ENCODE measurements at regions of chr17 and their contacts with region 1.

Region 1: GRCh38 chr17:45135192-45135977 is at the start of gene ACBD4:
- DNase-seq: peak; percentile 99 to 100
- ATAC-seq: peak; percentile 59 to 78
- H3K4me3 ChIP-seq: peak within 1 kb of the TSS; percentile 55
- H3K27ac ChIP-seq: peak within 1 kb of the TSS; percentile 82 to 93
- H3K4me1 ChIP-seq: peaks cover 33% of the 10 kb centered on the region
- CTCF ChIP-seq: peak; percentile 100
- EP300 ChIP-seq: no peak
- POLR2A ChIP-seq: peak; percentile 77
- RAD21 ChIP-seq: peak; percentile 99 to 100
- polyA plus RNA-seq, gene ACBD4: 11.2 and 11.4 TPM in 2 replicates

Region 2: GRCh38 chr17:44758414-44759085 is 376.8 kb before region 1 on chr17 and contains the start of gene ADAM11:
- CTCF ChIA-PET with region 1: no interaction called
- POLR2A ChIA-PET with region 1: no interaction called
- DNase-seq: peak in 1 of 2 experiments; percentile 74
- ATAC-seq: peak; percentile 39 to 58
- H3K4me3 ChIP-seq: peak within 1 kb of the TSS; percentile 64
- H3K27ac ChIP-seq: peak within 1 kb of the TSS; percentile 62 to 89; a peak in 5 of 6 replicates
- H3K4me1 ChIP-seq: peaks cover 10% of the 10 kb centered on the region; the same call in 1 of the 3 replicates
- CTCF ChIP-seq: no peak
- EP300 ChIP-seq: no peak
- POLR2A ChIP-seq: no peak
- RAD21 ChIP-seq: no peak
- polyA plus RNA-seq, gene ADAM11: 0.75 and 0.79 TPM in 2 replicates

Region 3: GRCh38 chr17:44988044-44988942 is 147.1 kb before region 1 on chr17:
- CTCF ChIA-PET with region 1: interaction called, 11 read pairs
- POLR2A ChIA-PET with region 1: no interaction called
- DNase-seq: no peak
- ATAC-seq: no peak
- H3K4me3 ChIP-seq: no peak overlapping the region
- H3K27ac ChIP-seq: no peak overlapping the region
- H3K4me1 ChIP-seq: peaks cover 6% of the 10 kb centered on the region; the same call in 1 of the 3 replicates
- CTCF ChIP-seq: no peak
- EP300 ChIP-seq: no peak
- POLR2A ChIP-seq: no peak
- RAD21 ChIP-seq: no peak

Region 4: GRCh38 chr17:45067637-45068036 is 67.7 kb before region 1 on chr17:
- CTCF ChIA-PET with region 1: interaction called, 19 read pairs
- POLR2A ChIA-PET with region 1: no interaction called
- DNase-seq: no peak
- ATAC-seq: no peak
- H3K4me3 ChIP-seq: no peak overlapping the region
- H3K27ac ChIP-seq: no peak overlapping the region
- H3K4me1 ChIP-seq: peaks cover 2% of the 10 kb centered on the region
- CTCF ChIP-seq: no peak
- EP300 ChIP-seq: no peak
- POLR2A ChIP-seq: no peak
- RAD21 ChIP-seq: no peak

Region 5: GRCh38 chr17:45148183-45149036 is 13.0 kb after region 1 on chr17 and contains the start of gene HEXIM1:
- CTCF ChIA-PET with region 1: interaction called, 659 read pairs
- POLR2A ChIA-PET with region 1: interaction called, 117 read pairs
- DNase-seq: peak; percentile 99 to 100
- ATAC-seq: peak; percentile 74 to 86
- H3K4me3 ChIP-seq: peak within 1 kb of the TSS; percentile 74
- H3K27ac ChIP-seq: peak within 1 kb of the TSS; percentile 97 to 98
- H3K4me1 ChIP-seq: peaks cover 27% of the 10 kb centered on the region
- CTCF ChIP-seq: no peak
- EP300 ChIP-seq: no peak
- POLR2A ChIP-seq: peak; percentile 100
- RAD21 ChIP-seq: peak in 1 of 2 experiments; percentile 7; a peak in 1 of 5 replicates
- polyA plus RNA-seq, gene HEXIM1: 39.3 and 54.0 TPM in 2 replicates

Region 6: GRCh38 chr17:45218895-45219661 is 83.7 kb after region 1 on chr17:
- CTCF ChIA-PET with region 1: interaction called, 41 read pairs
- POLR2A ChIA-PET with region 1: interaction called, 4 read pairs
- DNase-seq: peak; percentile 85 to 87
- ATAC-seq: peak; percentile 61 to 82
- H3K4me3 ChIP-seq: no peak overlapping the region
- H3K27ac ChIP-seq: peak overlapping the region; percentile 97
- H3K4me1 ChIP-seq: peaks cover 37% of the 10 kb centered on the region
- CTCF ChIP-seq: peak; percentile 99
- EP300 ChIP-seq: no peak
- POLR2A ChIP-seq: no peak
- RAD21 ChIP-seq: peak; percentile 99 to 100

Region 7: DNA sequence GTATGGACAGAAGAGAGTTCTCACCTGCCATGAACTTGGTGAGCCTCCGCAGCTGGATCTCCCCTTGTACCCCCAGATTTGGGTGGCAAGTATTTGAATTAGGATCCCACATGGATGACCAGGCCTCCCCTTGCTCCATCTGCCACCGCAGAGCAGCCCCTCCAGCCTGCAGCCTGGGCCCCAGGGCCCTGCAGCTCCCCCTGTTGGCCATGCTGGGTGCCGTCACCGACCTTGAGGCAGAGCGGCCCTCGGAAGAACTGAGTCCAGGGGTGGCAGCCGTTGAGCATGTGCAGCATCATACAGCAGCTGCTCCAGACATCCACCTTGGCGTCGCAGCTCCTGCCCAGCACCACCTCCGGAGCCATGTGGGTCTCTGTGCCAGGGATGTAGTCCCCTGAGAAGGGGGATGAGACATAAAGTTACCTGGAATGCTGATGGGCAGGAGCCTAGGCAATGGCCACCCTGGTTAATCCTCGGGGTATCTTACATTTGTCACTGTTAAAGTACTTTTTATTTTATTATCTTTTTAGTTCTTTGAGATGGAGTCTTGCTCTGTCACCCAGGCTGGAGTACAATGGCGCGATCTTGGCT is 135.5 kb after region 1 on chr17:
- CTCF ChIA-PET with region 1: interaction called, 22 read pairs
- POLR2A ChIA-PET with region 1: no interaction called
- DNase-seq: peak in 1 of 2 experiments; percentile 68
- ATAC-seq: peak; percentile 36 to 72; a peak in 4 of 6 replicates
- H3K4me3 ChIP-seq: no peak overlapping the region
- H3K27ac ChIP-seq: no peak overlapping the region
- H3K4me1 ChIP-seq: peaks cover 21% of the 10 kb centered on the region
- CTCF ChIP-seq: peak; percentile 68
- EP300 ChIP-seq: no peak
- POLR2A ChIP-seq: no peak
- RAD21 ChIP-seq: peak; percentile 45 to 46; a peak in 4 of 5 replicates